Adrenal gland (tissue), 19 donors: ENCODE measurements at regions of chr2 and their contacts with region 1.

Region 1: GRCh38 chr2:237572021-237572741 is 5.8 kb downstream of the PRLH start:
- DNase-seq: peak; percentile 90 to 95 (median 92)
- H3K4me3 ChIP-seq: no peak overlapping the region
- H3K27ac ChIP-seq: no peak overlapping the region
- H3K4me1 ChIP-seq: peaks cover 4 to 5% of the 10 kb centered on the region in 2 donors
- H3K27me3 ChIP-seq: no peaks in the 10 kb centered on the region
- CTCF ChIP-seq: peak; percentile 95 to 99 (median 98)
- POLR2A ChIP-seq: no peak

Region 2: DNA sequence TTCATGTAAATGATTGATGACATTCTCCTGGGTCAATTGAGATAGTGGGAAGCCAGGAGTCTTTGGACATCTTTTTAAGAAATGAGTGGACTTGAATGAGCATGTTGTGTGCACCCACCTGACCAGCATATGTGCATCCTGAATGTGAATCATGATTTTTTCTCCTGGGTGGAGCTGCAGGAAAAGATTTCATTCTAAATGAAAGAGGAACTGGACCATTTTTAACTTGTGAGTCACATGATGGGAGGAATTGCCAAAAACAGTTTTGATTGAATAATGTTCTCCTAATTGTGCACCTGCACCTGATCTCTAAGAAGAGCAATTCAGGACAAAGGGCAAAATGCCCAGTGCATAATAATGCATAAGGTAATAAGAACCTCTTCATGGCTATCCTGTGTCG is 454.2 kb before region 1 on chr2:
- intact Hi-C with region 1: loop called in 1 of 2 experiments (anchors 10 kb)
- DNase-seq: no peak
- H3K4me3 ChIP-seq: no peak overlapping the region
- H3K27ac ChIP-seq: no peak overlapping the region
- H3K4me1 ChIP-seq: no peaks in the 10 kb centered on the region
- H3K27me3 ChIP-seq: no peaks in the 10 kb centered on the region
- CTCF ChIP-seq: no peak
- POLR2A ChIP-seq: no peak

Region 3: DNA sequence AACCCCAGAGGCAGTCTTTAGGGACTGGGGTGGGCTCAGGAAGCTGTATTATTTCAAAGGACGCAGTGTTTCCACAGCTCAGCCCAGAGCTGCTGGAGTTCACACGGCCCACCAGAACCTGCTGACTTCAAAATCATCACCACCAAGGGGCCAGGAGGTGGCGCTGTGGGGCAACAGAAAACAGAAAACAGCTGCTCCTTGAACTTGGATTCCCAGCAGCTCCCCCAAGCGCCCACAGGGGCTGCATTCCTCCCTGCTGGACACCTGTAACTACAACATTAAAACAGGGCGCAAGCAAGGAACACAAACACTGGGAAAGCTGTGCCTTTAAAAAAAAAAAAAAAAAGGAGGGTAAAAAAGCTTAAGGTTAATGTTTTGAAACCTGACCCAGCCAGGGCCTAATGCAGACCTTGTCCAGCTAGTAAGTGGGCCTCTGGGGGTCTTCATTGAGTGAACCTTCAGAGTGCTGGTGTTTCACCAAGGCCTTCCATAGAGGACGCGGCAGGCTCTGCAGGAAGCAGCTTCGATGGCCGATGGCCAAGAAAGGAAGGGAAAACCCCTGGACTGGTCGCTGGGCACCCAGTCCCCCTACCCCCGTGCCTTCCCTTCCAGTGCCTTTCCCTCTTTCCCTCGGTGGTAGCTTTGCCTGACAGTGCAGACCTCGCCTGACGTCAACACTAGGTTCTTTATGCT is 59.3 kb before region 1 on chr2:
- intact Hi-C with region 1: loop called (anchors 2 to 5 kb)
- DNase-seq: peak; percentile 80 to 95 (median 87)
- H3K4me3 ChIP-seq: no peak overlapping the region
- H3K27ac ChIP-seq: no peak overlapping the region
- H3K4me1 ChIP-seq: peaks cover 5 to 13% of the 10 kb centered on the region in 2 donors
- H3K27me3 ChIP-seq: no peaks in the 10 kb centered on the region
- CTCF ChIP-seq: peak; percentile 85 to 96 (median 92)
- POLR2A ChIP-seq: no peak